HEK293 (cell line): ENCODE measurements at regions of chr7 and their contacts with region 1.

Region 1: DNA sequence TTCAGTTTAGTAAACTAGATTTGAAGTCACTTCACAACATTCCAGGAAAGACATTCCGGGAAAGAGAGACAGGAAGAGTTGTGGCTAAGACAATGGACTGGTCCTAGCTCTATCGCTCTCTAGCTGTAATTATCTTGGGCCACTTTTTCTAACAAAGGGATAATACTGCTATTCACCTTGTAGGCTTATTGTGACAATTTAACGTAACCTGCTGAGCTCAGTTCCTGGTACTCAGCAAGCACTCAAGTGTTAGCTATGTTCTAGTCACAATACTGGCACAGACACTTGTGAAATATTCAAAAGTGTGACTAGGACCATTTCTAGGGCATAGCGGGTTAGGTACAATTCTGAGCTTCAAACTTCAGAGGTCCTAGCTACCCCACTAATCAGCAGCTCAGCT is 12.0 kb upstream of the NRCAM start:
- H3K4me3 ChIP-seq: no peak overlapping the region
- H3K27ac ChIP-seq: no peak overlapping the region
- H3K4me1 ChIP-seq: no peaks in the 10 kb centered on the region
- CTCF ChIP-seq: no peak

Region 2: GRCh38 chr7:108156897-108157602 is 311.2 kb before region 1 on chr7:
- CTCF ChIA-PET with region 1: interaction called, 10 read pairs
- POLR2A ChIA-PET with region 1: no interaction called
- H3K4me3 ChIP-seq: no peak overlapping the region
- H3K27ac ChIP-seq: no peak overlapping the region
- H3K4me1 ChIP-seq: no peaks in the 10 kb centered on the region
- CTCF ChIP-seq: no peak